H1 (cell line): ENCODE measurements at regions of chr22 and their contacts with region 1.

Region 1: GRCh38 chr22:32218470-32218869 is 13.6 kb upstream of the RFPL2 start:
- DNase-seq: no peak
- H3K4me3 ChIP-seq: no peak overlapping the region
- H3K27ac ChIP-seq: no peak overlapping the region
- H3K4me1 ChIP-seq: no peaks in the 10 kb centered on the region
- H3K27me3 ChIP-seq: no peaks in the 10 kb centered on the region
- CTCF ChIP-seq: no peak
- EP300 ChIP-seq: no peak
- POLR2A ChIP-seq: no peak
- RAD21 ChIP-seq: no peak

Region 2: DNA sequence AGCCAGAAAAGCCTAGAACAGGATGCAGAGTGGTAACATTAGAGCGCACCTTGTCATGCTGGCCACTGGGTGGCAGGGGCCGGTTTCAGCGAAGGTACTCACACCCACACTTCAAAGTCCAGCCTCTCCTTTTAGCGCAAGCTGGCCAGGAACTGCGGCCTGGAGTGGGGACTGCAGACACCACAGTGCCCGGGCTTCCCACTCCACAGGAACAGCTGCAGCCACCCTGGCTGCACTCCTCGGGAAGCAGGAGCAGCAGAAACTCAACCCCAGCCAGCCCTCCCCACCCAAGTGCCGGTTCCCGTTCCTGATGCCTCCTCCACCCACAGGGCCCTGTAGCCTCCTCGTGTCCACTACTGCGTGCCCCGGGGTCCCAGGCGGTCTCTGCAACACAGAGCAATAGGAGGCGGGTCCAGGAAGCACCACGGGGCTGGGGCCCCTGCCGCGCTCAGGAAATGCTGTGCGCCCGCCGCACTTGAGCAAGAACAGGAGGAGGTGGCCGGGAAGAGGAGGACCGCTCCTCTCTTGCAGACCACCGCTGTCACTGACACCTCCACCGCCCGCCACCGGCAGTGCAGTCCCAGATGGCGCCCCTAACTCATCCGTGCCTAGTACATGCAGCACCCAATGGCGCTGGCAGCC is 15.8 kb before region 1 on chr22:
- CTCF ChIA-PET with region 1: interaction called, 11 read pairs
- POLR2A ChIA-PET with region 1: no interaction called
- DNase-seq: peak in 1 of 2 experiments; percentile 59
- H3K4me3 ChIP-seq: peak overlapping the region in 3 of 4 experiments; percentile 47 to 61 (median 56); a peak in 4 of 8 replicates
- H3K27ac ChIP-seq: no peak overlapping the region
- H3K4me1 ChIP-seq: peaks cover 0 to 32% (median 15%) of the 10 kb centered on the region in 4 experiments; a peak in 5 of 7 replicates
- H3K27me3 ChIP-seq: peaks cover 19 to 50% (median 42%) of the 10 kb centered on the region in 4 experiments
- CTCF ChIP-seq: peak; percentile 77 to 89 (median 87)
- EP300 ChIP-seq: no peak
- POLR2A ChIP-seq: no peak
- RAD21 ChIP-seq: peak; percentile 58 to 68